Heart right ventricle (tissue), 16 donors: ENCODE measurements at regions of chr11 and their contacts with region 1.

Region 1: GRCh38 chr11:111878849-111879636 is at the starts of genes CFAP68 and FDXACB1:
- DNase-seq: peak; percentile 93 to 98
- ATAC-seq: peak; percentile 94 to 98 (median 96)
- H3K4me3 ChIP-seq: peak within 1 kb of the TSS; percentile 57 to 86 (median 72)
- H3K27ac ChIP-seq: peak within 1 kb of the TSS; percentile 91 to 98 (median 95)
- H3K4me1 ChIP-seq: peaks cover 0 to 23% (median 19%) of the 10 kb centered on the region in 9 donors
- H3K27me3 ChIP-seq: no peaks in the 10 kb centered on the region
- CTCF ChIP-seq: peak; percentile 81 to 99 (median 97)
- total RNA-seq, gene CFAP68: 17.5 to 38.5 (median 31.5) TPM
- total RNA-seq, gene FDXACB1: 1.1 to 2.0 (median 1.5) TPM

Region 2: DNA sequence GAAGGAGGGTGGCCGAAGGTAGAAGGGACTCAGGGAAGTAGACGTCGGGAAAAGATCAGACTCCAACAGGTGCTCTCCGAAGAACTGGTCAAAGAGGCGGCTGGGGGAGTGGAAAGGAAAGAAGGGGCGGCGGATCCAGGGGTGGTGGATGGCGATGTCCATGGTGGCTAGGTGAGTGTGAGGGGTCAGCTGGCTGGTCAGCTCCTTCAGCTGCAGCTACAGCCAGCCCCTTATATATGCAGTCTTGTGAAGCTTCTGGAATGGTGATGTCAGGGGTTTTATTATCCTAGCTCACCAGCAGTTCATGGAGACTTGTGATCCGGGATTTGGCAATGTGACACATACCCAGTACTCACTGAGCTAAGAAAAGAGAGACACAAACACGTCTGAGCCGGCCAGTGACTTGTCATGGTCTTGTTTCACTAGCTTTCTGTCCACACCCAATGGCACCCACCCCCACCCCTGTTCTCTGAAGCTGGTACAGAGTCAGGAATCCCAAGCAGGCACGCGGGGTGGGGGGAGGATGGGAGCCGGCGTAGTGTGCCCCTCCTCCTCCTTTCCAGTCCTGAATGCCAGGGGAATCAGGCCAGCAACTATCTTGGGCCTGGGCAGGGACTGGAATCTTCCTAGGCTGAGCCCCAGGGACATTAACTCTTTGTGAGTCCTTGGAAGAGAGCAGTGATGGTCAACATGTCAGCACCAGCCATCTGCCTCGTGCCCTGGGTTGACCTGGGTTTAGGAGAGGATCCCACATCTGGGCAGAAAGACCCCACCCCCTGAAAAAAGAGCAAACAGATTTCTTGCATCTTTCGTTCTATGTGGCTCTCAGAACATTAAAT is 32.7 kb after region 1 on chr11 and contains the start of gene CRYAB:
- intact Hi-C with region 1: loop called in 4 of 10 experiments (anchors 5 kb)
- DNase-seq: peak; percentile 85 to 89
- ATAC-seq: peak; percentile 70 to 87 (median 76)
- H3K4me3 ChIP-seq: peak within 1 kb of the TSS; percentile 53 to 69 (median 62)
- H3K27ac ChIP-seq: peak within 1 kb of the TSS; percentile 94 to 99 (median 95)
- H3K4me1 ChIP-seq: peaks cover 0 to 22% (median 9%) of the 10 kb centered on the region in 9 donors
- H3K27me3 ChIP-seq: peaks cover 0 to 44% (median 0%) of the 10 kb centered on the region in 7 donors
- CTCF ChIP-seq: no peak
- total RNA-seq, gene CRYAB: 7,877 to 10,608 (median 8,590) TPM

Region 3: GRCh38 chr11:111926505-111927391 is 47.7 kb after region 1 on chr11:
- intact Hi-C with region 1: loop called in 8 of 10 experiments (anchors 1 to 10 kb)
- DNase-seq: peak; percentile 96 to 97
- ATAC-seq: peak; percentile 95 to 97 (median 96)
- H3K4me3 ChIP-seq: peak overlapping the region in 9 of 10 donors; percentile 22 to 58 (median 52)
- H3K27ac ChIP-seq: peak overlapping the region; percentile 39 to 94 (median 86)
- H3K4me1 ChIP-seq: peaks cover 5 to 54% (median 40%) of the 10 kb centered on the region in 9 donors
- H3K27me3 ChIP-seq: no peaks in the 10 kb centered on the region
- CTCF ChIP-seq: peak in 1 of 9 donors; percentile 5

Region 4: DNA sequence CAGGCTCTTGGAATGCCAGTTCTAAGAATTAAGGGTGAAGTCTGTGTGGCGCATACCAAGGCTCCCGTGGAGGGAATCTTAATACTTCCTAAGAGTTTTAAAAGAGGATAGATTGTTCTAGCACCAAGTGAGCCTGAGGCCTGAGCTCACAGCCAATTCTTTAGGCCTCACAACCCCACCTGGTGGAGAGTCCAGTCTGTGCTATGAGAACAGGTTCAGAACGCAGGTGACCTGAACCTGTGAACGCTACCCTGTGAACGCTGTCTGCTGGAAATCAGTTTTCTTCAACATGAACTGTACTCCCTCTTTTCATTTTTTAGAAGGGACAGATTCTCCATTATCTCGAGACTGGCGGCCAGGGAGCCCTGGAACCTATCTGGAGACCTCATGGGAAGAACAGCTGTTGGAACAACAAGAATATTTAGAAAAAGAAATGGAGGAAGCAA is 103.0 kb after region 1 on chr11:
- intact Hi-C with region 1: loop called in 9 of 10 experiments (anchors 1 to 10 kb)
- DNase-seq: peak in 1 of 2 donors; percentile 40
- ATAC-seq: peak in 7 of 8 donors; percentile 51 to 65 (median 55)
- H3K4me3 ChIP-seq: no peak overlapping the region
- H3K27ac ChIP-seq: peak overlapping the region in 6 of 10 donors; percentile 49 to 71 (median 62)
- H3K4me1 ChIP-seq: peaks cover 9 to 63% (median 35%) of the 10 kb centered on the region in 9 donors
- H3K27me3 ChIP-seq: peaks cover 0 to 21% (median 0%) of the 10 kb centered on the region in 7 donors
- CTCF ChIP-seq: peak; percentile 30 to 73 (median 56)

Region 5: GRCh38 chr11:111992206-111992855 is 113.3 kb after region 1 on chr11:
- intact Hi-C with region 1: loop called in 3 of 10 experiments (anchors 2 to 5 kb)
- DNase-seq: no peak
- ATAC-seq: peak in 7 of 8 donors; percentile 38 to 76 (median 43)
- H3K4me3 ChIP-seq: no peak overlapping the region
- H3K27ac ChIP-seq: peak overlapping the region in 8 of 10 donors; percentile 33 to 76 (median 60)
- H3K4me1 ChIP-seq: peaks cover 3 to 44% (median 18%) of the 10 kb centered on the region in 9 donors
- H3K27me3 ChIP-seq: no peaks in the 10 kb centered on the region
- CTCF ChIP-seq: no peak

Region 6: DNA sequence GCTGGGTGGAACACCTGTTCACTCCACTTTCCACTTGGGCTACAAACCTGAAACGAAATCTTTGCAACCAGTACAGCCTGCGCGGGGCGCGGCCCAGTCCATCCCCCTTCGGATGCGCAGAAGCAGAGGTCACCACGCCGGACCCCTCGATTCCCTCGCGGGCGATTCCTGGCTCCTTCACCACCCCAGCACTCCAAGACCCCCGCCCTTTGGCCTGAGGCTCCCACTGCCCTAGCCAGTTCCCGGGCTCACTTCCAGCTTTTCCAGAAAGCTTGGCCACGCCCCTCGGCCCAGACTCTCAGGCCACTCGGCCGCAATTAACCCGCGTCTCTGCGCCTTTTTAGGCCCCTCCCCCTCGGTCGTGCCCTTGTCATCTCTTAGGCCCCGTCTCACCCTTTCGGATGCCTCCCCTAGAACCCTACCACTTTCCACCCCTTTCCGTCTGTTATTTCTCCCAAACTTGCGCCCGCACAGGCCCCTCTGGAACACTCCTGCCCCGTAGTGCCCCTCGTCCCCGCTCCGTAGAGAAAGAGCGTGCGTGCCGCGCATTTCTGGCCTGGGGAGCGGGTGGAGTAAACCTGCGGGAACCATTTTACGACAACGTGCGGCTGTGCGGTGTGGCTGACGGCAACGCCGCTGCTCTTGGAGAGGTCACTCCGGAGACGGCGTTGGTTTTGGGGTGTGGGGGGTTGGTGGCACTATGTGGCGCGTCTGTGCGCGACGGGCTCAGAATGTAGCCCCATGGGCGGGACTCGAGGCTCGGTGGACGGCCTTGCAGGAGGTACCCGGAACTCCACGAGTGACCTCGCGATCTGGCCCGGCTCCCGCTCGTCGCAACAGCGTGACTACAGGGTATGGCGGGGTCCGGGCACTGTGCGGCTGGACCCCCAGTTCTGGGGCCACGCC is 146.0 kb after region 1 on chr11 and contains the start of gene DLAT:
- intact Hi-C with region 1: loop called in 1 of 10 experiments (anchors 5 kb)
- DNase-seq: peak; percentile 88 to 89
- ATAC-seq: peak; percentile 93 to 96 (median 94)
- H3K4me3 ChIP-seq: peak within 1 kb of the TSS; percentile 49 to 99 (median 84)
- H3K27ac ChIP-seq: peak within 1 kb of the TSS; percentile 88 to 96 (median 93)
- H3K4me1 ChIP-seq: peaks cover 0 to 50% (median 18%) of the 10 kb centered on the region in 9 donors
- H3K27me3 ChIP-seq: no peaks in the 10 kb centered on the region
- CTCF ChIP-seq: no peak
- total RNA-seq, gene DLAT: 128 to 191 (median 171) TPM

Region 7: GRCh38 chr11:112050721-112051120 is 171.7 kb after region 1 on chr11:
- intact Hi-C with region 1: no loop called
- DNase-seq: no peak
- ATAC-seq: no peak
- H3K4me3 ChIP-seq: no peak overlapping the region
- H3K27ac ChIP-seq: no peak overlapping the region
- H3K4me1 ChIP-seq: peaks cover 0 to 12% (median 0%) of the 10 kb centered on the region in 9 donors
- H3K27me3 ChIP-seq: no peaks in the 10 kb centered on the region
- CTCF ChIP-seq: no peak

Region 8: DNA sequence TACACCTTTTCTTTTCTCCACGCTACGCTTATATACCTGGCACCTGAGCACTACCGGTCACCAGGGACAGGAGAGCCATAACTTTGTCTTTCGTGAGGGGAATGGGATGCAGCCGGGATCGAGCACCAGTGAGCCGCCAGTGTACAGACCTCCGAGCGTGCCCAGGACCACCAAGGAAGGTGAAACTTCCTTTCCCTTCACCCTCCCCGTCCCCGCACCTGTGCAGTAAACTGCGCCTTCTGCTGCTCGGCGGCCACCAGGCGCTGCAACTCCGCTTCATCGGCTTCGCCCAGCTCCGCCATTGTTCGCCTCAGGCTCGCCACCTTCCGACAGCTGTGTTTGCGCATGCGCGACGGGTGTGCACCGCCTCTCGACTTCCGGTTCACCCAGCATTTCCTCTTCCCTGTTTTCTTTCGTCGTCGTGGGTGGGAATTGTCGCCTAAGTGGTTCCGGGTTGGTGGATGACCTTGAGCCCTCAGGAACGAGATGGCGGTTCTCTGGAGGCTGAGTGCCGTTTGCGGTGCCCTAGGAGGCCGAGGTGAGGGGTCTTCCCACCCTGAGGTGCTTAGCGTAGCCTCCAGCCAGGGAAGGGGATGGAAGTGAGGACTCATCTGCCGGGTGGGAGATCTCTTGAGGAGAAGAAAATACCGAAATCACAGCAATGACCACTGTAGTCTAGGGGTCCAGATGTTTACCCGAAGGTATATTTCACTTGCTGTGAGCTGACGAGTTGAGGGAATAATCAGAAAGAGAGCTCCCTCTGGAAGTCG is 207.6 kb after region 1 on chr11 and contains the starts of genes SDHD and TIMM8B:
- intact Hi-C with region 1: loop called in 3 of 10 experiments (anchors 2 to 10 kb)
- DNase-seq: peak; percentile 95 to 97
- ATAC-seq: peak; percentile 92 to 98 (median 96)
- H3K4me3 ChIP-seq: peak within 1 kb of the TSS; percentile 71 to 94 (median 84)
- H3K27ac ChIP-seq: peak within 1 kb of the TSS; percentile 69 to 95 (median 88)
- H3K4me1 ChIP-seq: peaks cover 3 to 68% (median 36%) of the 10 kb centered on the region in 9 donors
- H3K27me3 ChIP-seq: no peaks in the 10 kb centered on the region
- CTCF ChIP-seq: peak in 5 of 9 donors; percentile 18 to 50 (median 46)
- total RNA-seq, gene SDHD: 205 to 330 (median 279) TPM
- total RNA-seq, gene TIMM8B: 142 to 194 (median 168) TPM

Region 9: DNA sequence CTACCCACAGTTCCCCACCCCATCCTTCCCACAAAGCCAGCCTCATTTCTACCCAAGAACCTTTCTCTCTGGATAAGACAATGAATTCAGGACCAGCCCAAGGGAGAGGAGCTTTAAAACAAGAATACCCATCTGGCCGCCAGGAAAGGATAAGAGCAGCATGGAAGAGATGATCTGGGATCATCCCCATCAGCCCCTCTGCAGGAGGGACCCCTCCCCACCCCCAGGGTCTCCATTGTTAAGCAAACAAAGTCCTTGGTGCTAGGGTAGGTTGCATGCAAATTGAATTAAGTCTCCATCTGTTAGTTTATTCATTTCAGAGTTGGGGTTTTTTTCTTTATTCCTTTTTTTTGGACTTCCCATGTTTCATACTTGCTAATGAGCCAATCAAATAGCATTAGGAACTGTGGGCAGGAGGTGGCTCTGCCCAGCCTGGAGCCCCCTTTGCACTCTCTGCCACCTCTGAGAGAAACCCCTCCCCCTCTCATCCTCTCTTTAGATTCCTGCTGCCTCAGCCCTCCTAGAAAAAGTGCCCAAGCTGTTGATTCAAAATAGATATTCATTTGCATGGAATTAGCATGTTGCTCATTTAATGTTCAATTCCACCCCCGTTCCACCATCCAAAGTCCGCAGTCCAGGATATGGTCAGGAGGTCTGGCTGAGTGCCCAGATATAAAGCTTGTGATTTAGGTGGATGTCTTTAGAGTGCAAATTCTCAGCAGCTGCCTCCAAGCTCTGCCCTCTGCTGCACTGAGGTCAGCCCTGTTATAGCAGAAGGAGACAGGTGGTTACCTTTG is 943.6 kb after region 1 on chr11:
- intact Hi-C with region 1: no loop called
- DNase-seq: no peak
- ATAC-seq: no peak
- H3K4me3 ChIP-seq: no peak overlapping the region
- H3K27ac ChIP-seq: no peak overlapping the region
- H3K4me1 ChIP-seq: no peaks in the 10 kb centered on the region
- H3K27me3 ChIP-seq: no peaks in the 10 kb centered on the region
- CTCF ChIP-seq: no peak

Region 10: DNA sequence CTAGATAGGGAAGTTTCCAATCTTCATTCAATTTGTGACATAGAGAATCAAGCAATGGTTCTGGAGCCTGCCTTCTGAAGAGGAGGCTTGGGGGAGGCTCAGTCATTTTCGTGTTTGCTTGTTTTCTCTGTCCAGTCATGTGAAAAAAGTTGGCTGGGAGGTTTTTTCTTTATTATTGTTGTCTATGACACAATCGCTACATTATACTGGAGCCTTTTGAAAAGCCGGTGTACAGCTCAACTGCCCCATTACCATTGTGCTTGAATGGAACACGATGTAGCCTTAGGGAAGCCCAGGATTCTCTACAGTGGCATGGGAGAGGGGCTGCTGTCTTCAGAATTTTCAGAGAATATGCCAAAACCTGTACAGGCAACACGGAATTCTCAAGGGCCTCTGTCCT is 1024.3 kb after region 1 on chr11:
- intact Hi-C with region 1: no loop called
- DNase-seq: no peak
- ATAC-seq: no peak
- H3K4me3 ChIP-seq: no peak overlapping the region
- H3K27ac ChIP-seq: no peak overlapping the region
- H3K4me1 ChIP-seq: peaks cover 0 to 21% (median 9%) of the 10 kb centered on the region in 9 donors
- H3K27me3 ChIP-seq: peaks cover 0 to 2% (median 0%) of the 10 kb centered on the region in 7 donors
- CTCF ChIP-seq: no peak